Right ventricle myocardium inferior (tissue), 1 donor: ENCODE measurements at regions of chr3 and their contacts with region 1.

Region 1: GRCh38 chr3:188339410-188340295 is 185.7 kb downstream of the LPP start:
- DNase-seq: no peak
- ATAC-seq: no peak

Region 2: GRCh38 chr3:188185717-188186251 is 153.9 kb before region 1 on chr3:
- intact Hi-C with region 1: no loop called
- DNase-seq: no peak
- ATAC-seq: peak; percentile 74

Region 3: DNA sequence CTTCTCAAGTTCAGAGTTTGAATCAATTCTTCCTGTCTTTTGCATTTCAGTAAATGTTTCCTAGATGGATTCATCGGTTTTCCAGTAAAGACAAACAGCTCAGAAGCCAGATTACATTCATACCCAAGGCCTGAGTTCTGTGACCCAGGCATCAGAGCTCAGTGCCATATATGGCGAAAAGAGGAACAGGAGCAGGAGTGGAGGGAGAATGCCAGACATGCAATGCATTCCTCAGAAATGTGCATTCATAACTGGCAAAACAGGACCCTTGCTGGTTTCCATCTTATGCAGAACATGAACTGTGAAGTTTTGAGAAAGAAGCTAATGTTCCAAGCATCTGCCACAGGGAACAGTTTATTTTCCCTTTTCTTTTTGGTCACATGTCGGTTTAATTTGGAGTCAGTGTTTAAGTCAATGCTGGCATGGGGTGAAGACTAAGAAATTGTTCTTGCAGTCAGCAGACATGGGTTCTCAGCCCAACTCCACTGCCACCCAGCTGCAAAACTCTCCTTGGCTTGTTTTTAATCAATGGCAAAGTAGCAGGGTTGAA is 69.2 kb before region 1 on chr3:
- intact Hi-C with region 1: loop called (anchors 5 kb)
- DNase-seq: no peak
- ATAC-seq: no peak